MCF 10A (cell line): ENCODE measurements at regions of chr4 and their contacts with region 1.

Region 1: GRCh38 chr4:77618383-77619122 is 12.9 kb downstream of the CXCL13 start:
- DNase-seq: peak; percentile 78
- H3K4me3 Mint-ChIP-seq: no peak overlapping the region
- H3K27ac Mint-ChIP-seq: peak overlapping the region; percentile 71
- H3K4me1 Mint-ChIP-seq: peaks cover 16% of the 10 kb centered on the region
- H3K27me3 Mint-ChIP-seq: no peaks in the 10 kb centered on the region
- CTCF ChIP-seq: peak; percentile 74

Region 2: GRCh38 chr4:77367638-77368037 is 250.9 kb before region 1 on chr4:
- CTCF ChIA-PET with region 1: interaction called, 33 read pairs
- POLR2A ChIA-PET with region 1: interaction called, 3 read pairs
- intact Hi-C with region 1: loop called (anchors 1 kb)
- DNase-seq: no peak
- H3K4me3 Mint-ChIP-seq: no peak overlapping the region
- H3K27ac Mint-ChIP-seq: no peak overlapping the region
- H3K4me1 Mint-ChIP-seq: no peaks in the 10 kb centered on the region
- H3K27me3 Mint-ChIP-seq: no peaks in the 10 kb centered on the region
- CTCF ChIP-seq: no peak

Region 3: GRCh38 chr4:77433418-77433733 is 185.2 kb before region 1 on chr4:
- CTCF ChIA-PET with region 1: interaction called, 12 read pairs
- POLR2A ChIA-PET with region 1: no interaction called
- intact Hi-C with region 1: no loop called
- DNase-seq: peak; percentile 72
- H3K4me3 Mint-ChIP-seq: no peak overlapping the region
- H3K27ac Mint-ChIP-seq: no peak overlapping the region
- H3K4me1 Mint-ChIP-seq: no peaks in the 10 kb centered on the region
- H3K27me3 Mint-ChIP-seq: no peaks in the 10 kb centered on the region
- CTCF ChIP-seq: peak; percentile 64

Region 4: GRCh38 chr4:77465271-77465670 is 153.3 kb before region 1 on chr4:
- CTCF ChIA-PET with region 1: interaction called, 27 read pairs
- POLR2A ChIA-PET with region 1: interaction called, 4 read pairs
- intact Hi-C with region 1: loop called (anchors 1 kb)
- DNase-seq: peak; percentile 45
- H3K4me3 Mint-ChIP-seq: no peak overlapping the region
- H3K27ac Mint-ChIP-seq: no peak overlapping the region
- H3K4me1 Mint-ChIP-seq: no peaks in the 10 kb centered on the region
- H3K27me3 Mint-ChIP-seq: no peaks in the 10 kb centered on the region
- CTCF ChIP-seq: peak; percentile 61

Region 5: DNA sequence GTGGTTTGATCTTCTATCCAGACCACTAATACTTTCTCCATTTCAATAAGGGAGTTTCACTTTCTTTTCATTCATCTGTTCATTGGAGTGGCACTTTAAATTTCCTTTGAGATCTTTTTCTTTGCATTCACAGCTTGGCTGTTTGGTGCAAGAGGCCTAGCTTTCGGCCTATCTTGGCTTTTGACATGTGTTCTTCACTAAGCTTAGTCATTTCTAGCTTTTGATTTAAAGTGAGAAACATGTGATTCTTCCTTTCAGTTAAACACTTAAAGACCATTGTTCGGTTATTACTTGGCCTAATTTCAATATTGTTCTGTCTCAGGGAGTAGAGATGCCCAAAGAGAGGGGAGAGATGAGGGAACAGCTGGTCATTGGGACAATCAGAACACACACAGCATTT is 11.3 kb after region 1 on chr4:
- CTCF ChIA-PET with region 1: interaction called, 24 read pairs
- POLR2A ChIA-PET with region 1: no interaction called
- intact Hi-C with region 1: no loop called
- DNase-seq: no peak
- H3K4me3 Mint-ChIP-seq: no peak overlapping the region
- H3K27ac Mint-ChIP-seq: no peak overlapping the region
- H3K4me1 Mint-ChIP-seq: no peaks in the 10 kb centered on the region
- H3K27me3 Mint-ChIP-seq: no peaks in the 10 kb centered on the region
- CTCF ChIP-seq: no peak

Region 6: DNA sequence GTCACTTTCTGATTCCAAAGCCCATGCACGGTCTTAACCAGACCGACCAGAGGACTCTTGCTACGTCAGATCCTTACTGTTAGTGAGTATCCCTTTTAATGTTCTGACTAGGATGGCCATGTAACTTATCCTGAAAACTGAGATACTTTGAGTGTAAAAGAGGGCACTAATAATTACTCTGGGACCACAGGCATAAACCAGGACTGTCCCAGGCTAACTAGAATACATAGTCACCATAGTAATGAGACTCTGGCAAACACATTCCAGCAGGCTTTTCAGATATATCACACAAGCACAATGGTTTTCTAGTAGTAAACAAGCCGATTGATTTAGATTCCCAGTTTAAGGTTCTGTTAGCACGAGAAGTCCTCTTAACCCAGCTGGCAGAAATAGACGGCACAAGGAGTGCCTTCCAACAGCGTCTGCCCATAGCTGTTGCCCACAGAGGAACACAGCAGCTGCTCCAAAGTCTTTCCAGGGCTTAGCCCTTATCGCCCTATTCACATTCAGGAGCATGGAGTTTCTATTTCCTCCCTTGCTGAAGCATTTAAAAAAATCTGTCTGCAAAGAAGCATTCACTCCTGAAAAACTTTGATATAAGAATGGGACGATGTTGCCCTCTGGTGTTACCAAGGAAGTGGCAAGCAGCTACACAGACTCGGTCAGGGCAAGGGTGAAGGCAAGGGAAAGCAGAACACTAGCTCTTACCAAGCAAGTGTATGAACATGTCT is 79.5 kb after region 1 on chr4:
- CTCF ChIA-PET with region 1: interaction called, 20 read pairs
- POLR2A ChIA-PET with region 1: interaction called, 5 read pairs
- intact Hi-C with region 1: loop called (anchors 1 kb)
- DNase-seq: peak; percentile 73
- H3K4me3 Mint-ChIP-seq: no peak overlapping the region
- H3K27ac Mint-ChIP-seq: no peak overlapping the region
- H3K4me1 Mint-ChIP-seq: peaks cover 23% of the 10 kb centered on the region
- H3K27me3 Mint-ChIP-seq: no peaks in the 10 kb centered on the region
- CTCF ChIP-seq: peak; percentile 65